Transverse colon (tissue), 4 donors: ENCODE measurements at regions of chr16 and their contacts with region 1.

Region 1: GRCh38 chr16:64791756-64792155 is 330.1 kb downstream of the CDH11 start:
- DNase-seq: no peak
- H3K4me3 ChIP-seq: no peak overlapping the region
- H3K27ac ChIP-seq: no peak overlapping the region
- H3K4me1 ChIP-seq: no peaks in the 10 kb centered on the region
- H3K27me3 ChIP-seq: no peaks in the 10 kb centered on the region
- CTCF ChIP-seq: no peak
- EP300 ChIP-seq: no peak
- POLR2A ChIP-seq: no peak

Region 2: DNA sequence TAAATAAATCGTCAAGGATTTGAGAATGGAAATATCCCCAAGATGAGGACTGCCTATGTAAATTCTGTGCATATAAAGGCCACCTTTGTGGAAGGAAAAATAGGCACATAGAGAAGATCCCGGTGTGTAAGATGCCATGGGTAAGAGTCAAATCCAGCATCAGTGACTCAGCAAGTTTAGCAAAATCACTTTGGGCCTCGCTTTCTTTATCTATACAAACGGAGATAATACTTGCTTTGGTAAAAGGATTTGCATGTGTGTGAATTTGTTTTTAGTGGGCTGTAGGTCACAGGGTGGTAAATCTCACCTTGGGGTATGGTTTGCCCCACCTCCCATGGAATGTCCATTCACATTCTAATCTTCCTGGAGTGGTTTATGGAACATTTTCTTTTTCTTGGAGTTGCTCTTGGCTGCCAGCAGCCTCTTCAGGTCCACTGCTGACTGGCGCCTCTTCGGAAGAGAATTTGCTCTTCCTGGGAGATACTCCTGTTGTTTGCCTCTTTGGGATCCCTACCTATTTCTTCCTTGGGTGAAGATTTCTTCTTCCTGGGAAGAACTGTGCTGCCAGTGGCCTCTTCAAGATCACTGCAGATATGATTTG is 257.5 kb before region 1 on chr16:
- in situ Hi-C with region 1: no loop called
- intact Hi-C with region 1: no loop called
- DNase-seq: no peak
- H3K4me3 ChIP-seq: no peak overlapping the region
- H3K27ac ChIP-seq: no peak overlapping the region
- H3K4me1 ChIP-seq: no peaks in the 10 kb centered on the region
- H3K27me3 ChIP-seq: no peaks in the 10 kb centered on the region
- CTCF ChIP-seq: no peak
- EP300 ChIP-seq: no peak
- POLR2A ChIP-seq: no peak

Region 3: GRCh38 chr16:64687786-64688185 is 104.0 kb before region 1 on chr16:
- in situ Hi-C with region 1: no loop called
- intact Hi-C with region 1: no loop called
- DNase-seq: no peak
- H3K4me3 ChIP-seq: no peak overlapping the region
- H3K27ac ChIP-seq: no peak overlapping the region
- H3K4me1 ChIP-seq: no peaks in the 10 kb centered on the region
- H3K27me3 ChIP-seq: no peaks in the 10 kb centered on the region
- CTCF ChIP-seq: no peak
- EP300 ChIP-seq: no peak
- POLR2A ChIP-seq: no peak

Region 4: DNA sequence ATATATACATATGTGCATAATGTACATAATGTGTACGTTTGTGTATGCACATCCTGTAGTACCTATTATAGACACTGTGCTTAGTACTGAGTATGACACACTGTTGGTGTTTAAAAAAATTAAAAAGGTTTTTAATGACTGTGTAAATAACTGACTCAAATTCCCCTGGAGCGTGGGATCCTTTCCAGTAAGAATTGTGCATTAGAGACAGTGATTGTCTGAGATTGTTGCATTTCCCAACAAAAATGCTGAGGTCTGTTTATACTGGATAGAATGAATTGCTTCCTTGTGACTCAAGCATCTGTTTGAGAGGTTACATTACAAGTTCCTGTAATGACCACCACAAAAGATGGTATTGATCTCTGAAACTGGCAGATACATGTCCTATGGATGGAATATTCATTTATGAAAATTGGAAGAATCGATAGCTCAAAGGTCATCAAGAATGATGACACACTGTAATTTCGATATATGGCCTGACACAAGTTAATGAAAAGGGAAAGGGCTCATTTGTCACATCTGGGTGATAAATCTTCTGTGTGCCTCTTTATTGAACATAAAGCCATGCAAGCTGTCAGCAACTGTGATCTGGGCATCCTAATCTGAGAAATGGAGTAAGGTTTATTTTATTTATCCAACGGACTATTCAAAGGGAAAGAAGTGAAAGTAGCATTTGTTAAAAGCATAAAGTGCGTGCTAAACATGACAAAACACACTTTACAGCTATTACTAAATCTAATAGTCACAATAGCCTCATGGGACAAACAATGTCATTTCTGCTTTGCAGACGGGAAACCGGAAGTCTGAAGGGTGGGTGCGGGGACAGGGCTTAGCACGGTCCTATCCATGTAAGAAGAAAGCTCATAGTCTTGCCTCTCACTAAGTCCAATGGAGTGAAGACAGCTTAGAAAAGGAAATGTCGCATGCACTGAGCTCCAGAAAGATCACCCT is 101.4 kb after region 1 on chr16:
- in situ Hi-C with region 1: loop called in 1 of 4 experiments (anchors 25 kb)
- intact Hi-C with region 1: no loop called
- DNase-seq: no peak
- H3K4me3 ChIP-seq: no peak overlapping the region
- H3K27ac ChIP-seq: no peak overlapping the region
- H3K4me1 ChIP-seq: no peaks in the 10 kb centered on the region
- H3K27me3 ChIP-seq: no peaks in the 10 kb centered on the region
- CTCF ChIP-seq: no peak
- EP300 ChIP-seq: no peak
- POLR2A ChIP-seq: no peak